ENCODE measurements at regions of chr7 and their contacts with region 1.

Region 1: GRCh38 chr7:120805636-120806388 is 52.1 kb downstream of the TSPAN12 start:
- DNase-seq: peak; percentile 53
- ATAC-seq: peak; percentile 85
- H3K4me3 ChIP-seq: no peak overlapping the region
- H3K27ac ChIP-seq: no peak overlapping the region
- H3K4me1 ChIP-seq: no peaks in the 10 kb centered on the region
- H3K27me3 ChIP-seq: no peaks in the 10 kb centered on the region
- CTCF ChIP-seq: peak; percentile 74 to 86 (median 82)
- EP300 ChIP-seq: no peak
- POLR2A ChIP-seq: no peak
- RAD21 ChIP-seq: peak; percentile 84

Region 2: GRCh38 chr7:120675076-120675475 is 130.7 kb before region 1 on chr7:
- CTCF ChIA-PET with region 1: no interaction called
- POLR2A ChIA-PET with region 1: no interaction called
- RAD21 ChIA-PET with region 1: no interaction called
- SMC1A ChIA-PET with region 1: no interaction called
- in situ Hi-C with region 1: no loop called
- intact Hi-C with region 1: no loop called
- DNase-seq: no peak
- ATAC-seq: no peak
- H3K4me3 ChIP-seq: no peak overlapping the region
- H3K27ac ChIP-seq: no peak overlapping the region
- H3K4me1 ChIP-seq: no peaks in the 10 kb centered on the region
- H3K27me3 ChIP-seq: no peaks in the 10 kb centered on the region
- CTCF ChIP-seq: no peak
- EP300 ChIP-seq: no peak
- POLR2A ChIP-seq: no peak
- RAD21 ChIP-seq: no peak

Region 3: GRCh38 chr7:120819863-120820262 is 14.1 kb after region 1 on chr7:
- CTCF ChIA-PET with region 1: interaction called, 15 read pairs
- POLR2A ChIA-PET with region 1: no interaction called
- RAD21 ChIA-PET with region 1: interaction called, 14 read pairs
- SMC1A ChIA-PET with region 1: interaction called, 35 read pairs
- in situ Hi-C with region 1: no loop called
- intact Hi-C with region 1: no loop called
- DNase-seq: no peak
- ATAC-seq: peak; percentile 68
- H3K4me3 ChIP-seq: no peak overlapping the region
- H3K27ac ChIP-seq: no peak overlapping the region
- H3K4me1 ChIP-seq: no peaks in the 10 kb centered on the region
- H3K27me3 ChIP-seq: no peaks in the 10 kb centered on the region
- CTCF ChIP-seq: peak in 1 of 3 experiments; percentile 58; a peak in 2 of 6 replicates
- EP300 ChIP-seq: no peak
- POLR2A ChIP-seq: no peak
- RAD21 ChIP-seq: peak; percentile 37; the same call in 1 of the 2 replicates

Region 4: DNA sequence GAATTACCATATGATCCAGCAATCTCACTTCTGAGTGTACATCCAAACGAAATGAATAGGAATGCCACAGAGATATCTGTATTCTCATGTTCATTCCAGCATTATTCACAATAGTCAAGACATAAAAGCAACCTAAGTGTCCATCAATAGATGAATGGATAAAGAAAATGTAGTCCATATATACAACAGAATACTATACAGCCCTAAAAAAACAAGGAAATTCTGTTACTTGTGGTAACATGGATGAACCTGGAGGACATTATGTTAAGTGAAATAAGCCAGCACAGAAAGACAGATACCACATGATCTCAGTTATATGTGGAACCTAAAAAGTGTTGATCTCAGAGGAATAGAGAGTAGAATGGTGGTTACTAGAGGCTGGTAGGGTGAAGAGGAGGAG is 25.4 kb after region 1 on chr7:
- CTCF ChIA-PET with region 1: interaction called, 35 read pairs
- POLR2A ChIA-PET with region 1: interaction called, 4 read pairs
- RAD21 ChIA-PET with region 1: interaction called, 21 read pairs
- SMC1A ChIA-PET with region 1: interaction called, 34 read pairs
- in situ Hi-C with region 1: no loop called
- intact Hi-C with region 1: loop called (anchors 2 kb)
- DNase-seq: no peak
- ATAC-seq: peak; percentile 23
- H3K4me3 ChIP-seq: no peak overlapping the region
- H3K27ac ChIP-seq: no peak overlapping the region
- H3K4me1 ChIP-seq: 0 out of 2 replicates have a peak, but pooled peaks cover 3% of the 10 kb centered on the region
- H3K27me3 ChIP-seq: no peaks in the 10 kb centered on the region
- CTCF ChIP-seq: no peak
- EP300 ChIP-seq: no peak
- POLR2A ChIP-seq: no peak
- RAD21 ChIP-seq: no peak

Region 5: DNA sequence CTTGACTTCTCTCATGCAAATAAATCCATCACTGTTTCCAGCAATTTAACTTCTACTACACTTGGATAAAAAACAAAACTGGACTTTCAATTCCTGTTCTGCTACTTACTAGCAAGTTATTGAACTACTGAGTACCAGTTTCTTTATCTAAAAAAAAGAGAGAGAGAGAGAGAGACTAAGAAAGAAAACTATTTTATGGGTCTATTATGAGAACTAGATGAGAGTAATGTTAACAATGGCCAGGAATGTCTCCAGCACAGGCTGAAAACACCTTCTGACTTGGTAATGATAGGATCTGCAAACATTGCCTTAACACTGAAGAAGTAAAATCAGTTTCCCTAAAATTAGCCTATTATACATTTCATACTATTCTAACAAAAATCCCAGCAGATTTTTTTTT is 46.9 kb after region 1 on chr7:
- CTCF ChIA-PET with region 1: interaction called, 59 read pairs
- POLR2A ChIA-PET with region 1: interaction called, 11 read pairs
- RAD21 ChIA-PET with region 1: interaction called, 38 read pairs
- SMC1A ChIA-PET with region 1: interaction called, 73 read pairs
- in situ Hi-C with region 1: no loop called
- intact Hi-C with region 1: loop called (anchors 1 kb)
- DNase-seq: no peak
- ATAC-seq: no peak
- H3K4me3 ChIP-seq: no peak overlapping the region
- H3K27ac ChIP-seq: no peak overlapping the region
- H3K4me1 ChIP-seq: no peaks in the 10 kb centered on the region
- H3K27me3 ChIP-seq: no peaks in the 10 kb centered on the region
- CTCF ChIP-seq: no peak
- EP300 ChIP-seq: no peak
- POLR2A ChIP-seq: no peak
- RAD21 ChIP-seq: no peak

Region 6: DNA sequence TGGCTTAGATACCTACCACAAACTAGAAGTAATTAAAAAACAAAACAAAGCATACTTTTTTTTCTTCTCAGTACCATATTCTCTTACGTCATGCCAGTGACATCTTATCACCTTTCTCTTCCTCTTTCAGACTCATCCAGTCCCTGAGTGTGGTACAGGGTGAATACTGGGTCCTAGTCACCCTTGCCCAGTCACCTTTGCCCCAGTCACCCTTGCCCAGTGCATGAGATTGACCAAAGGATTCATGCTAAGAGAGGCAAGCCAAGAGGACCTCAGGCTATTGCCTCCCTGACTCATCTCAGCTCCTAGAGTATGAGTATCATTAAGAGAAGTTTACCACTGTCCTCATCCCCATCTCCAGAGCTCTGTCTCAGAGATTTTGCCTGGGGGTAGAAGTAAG is 62.1 kb after region 1 on chr7:
- CTCF ChIA-PET with region 1: interaction called, 34 read pairs
- POLR2A ChIA-PET with region 1: no interaction called
- RAD21 ChIA-PET with region 1: interaction called, 7 read pairs
- SMC1A ChIA-PET with region 1: interaction called, 12 read pairs
- in situ Hi-C with region 1: no loop called
- intact Hi-C with region 1: no loop called
- DNase-seq: no peak
- ATAC-seq: peak; percentile 91
- H3K4me3 ChIP-seq: no peak overlapping the region
- H3K27ac ChIP-seq: no peak overlapping the region
- H3K4me1 ChIP-seq: peaks cover 17% of the 10 kb centered on the region
- H3K27me3 ChIP-seq: no peaks in the 10 kb centered on the region
- CTCF ChIP-seq: no peak
- EP300 ChIP-seq: 0 out of 4 replicates have a peak, but pooled peaks of 1 of the 2 experiments have one; percentile 52
- POLR2A ChIP-seq: no peak
- RAD21 ChIP-seq: no peak

Region 7: GRCh38 chr7:120933475-120933874 is 127.7 kb after region 1 on chr7:
- CTCF ChIA-PET with region 1: interaction called, 8 read pairs
- POLR2A ChIA-PET with region 1: no interaction called
- RAD21 ChIA-PET with region 1: interaction called, 18 read pairs
- SMC1A ChIA-PET with region 1: interaction called, 23 read pairs
- in situ Hi-C with region 1: no loop called
- intact Hi-C with region 1: no loop called
- DNase-seq: no peak
- ATAC-seq: peak; percentile 80
- H3K4me3 ChIP-seq: no peak overlapping the region
- H3K27ac ChIP-seq: no peak overlapping the region
- H3K4me1 ChIP-seq: no peaks in the 10 kb centered on the region
- H3K27me3 ChIP-seq: no peaks in the 10 kb centered on the region
- CTCF ChIP-seq: no peak
- EP300 ChIP-seq: no peak
- POLR2A ChIP-seq: no peak
- RAD21 ChIP-seq: no peak

Region 8: DNA sequence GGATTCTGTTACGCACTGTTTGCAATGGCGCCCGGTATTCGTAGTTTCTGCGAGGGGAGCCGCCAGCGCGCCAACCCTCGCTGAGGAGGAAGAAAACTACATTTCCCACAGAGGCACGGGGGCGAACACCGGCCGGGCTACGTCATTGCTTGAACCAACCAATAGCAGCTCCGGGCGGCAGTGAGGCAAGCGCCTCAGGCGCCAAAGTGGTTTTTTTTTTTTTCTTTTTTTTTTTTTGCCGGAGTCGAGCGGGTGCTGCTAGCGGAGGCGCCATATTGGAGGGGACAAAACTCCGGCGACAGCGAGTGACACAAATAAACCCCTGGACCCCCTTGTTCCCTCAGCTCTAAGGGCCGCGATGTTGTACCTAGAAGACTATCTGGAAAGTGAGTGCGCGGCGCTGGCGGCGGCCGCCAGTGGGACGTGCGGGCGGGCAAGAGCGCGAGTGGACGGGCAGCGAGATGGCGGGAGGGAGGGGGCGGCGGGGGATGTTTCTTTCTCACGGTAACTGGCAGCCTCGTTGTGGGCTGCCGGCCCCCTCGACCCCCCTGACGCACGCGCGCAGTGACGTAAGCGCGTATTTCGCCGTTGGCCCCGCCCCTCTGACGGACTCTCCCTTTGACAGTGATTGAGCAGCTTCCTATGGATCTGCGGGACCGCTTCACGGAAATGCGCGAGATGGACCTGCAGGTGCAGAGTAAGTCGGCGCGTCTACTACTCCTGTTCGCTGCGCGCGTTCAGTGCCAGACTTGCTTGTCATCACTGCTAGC is 144.9 kb after region 1 on chr7 and contains the start of gene ING3:
- CTCF ChIA-PET with region 1: interaction called, 17 read pairs
- POLR2A ChIA-PET with region 1: interaction called, 4 read pairs
- RAD21 ChIA-PET with region 1: interaction called, 3 read pairs
- SMC1A ChIA-PET with region 1: interaction called, 12 read pairs
- in situ Hi-C with region 1: no loop called
- intact Hi-C with region 1: no loop called
- DNase-seq: peak; percentile 92
- ATAC-seq: peak; percentile 93
- H3K4me3 ChIP-seq: peak within 1 kb of the TSS; percentile 90
- H3K27ac ChIP-seq: peak within 1 kb of the TSS; percentile 97
- H3K4me1 ChIP-seq: 0 out of 2 replicates have a peak, but pooled peaks cover 5% of the 10 kb centered on the region
- H3K27me3 ChIP-seq: no peaks in the 10 kb centered on the region
- CTCF ChIP-seq: no peak
- EP300 ChIP-seq: 0 out of 4 replicates have a peak, but pooled peaks of 1 of the 2 experiments have one; percentile 15
- POLR2A ChIP-seq: peak; percentile 89
- RAD21 ChIP-seq: no peak
- polyA plus RNA-seq, gene ING3: 44.3 to 60.8 TPM